H1 (cell line): ENCODE measurements at regions of chr15 and their contacts with region 1.

Region 1: DNA sequence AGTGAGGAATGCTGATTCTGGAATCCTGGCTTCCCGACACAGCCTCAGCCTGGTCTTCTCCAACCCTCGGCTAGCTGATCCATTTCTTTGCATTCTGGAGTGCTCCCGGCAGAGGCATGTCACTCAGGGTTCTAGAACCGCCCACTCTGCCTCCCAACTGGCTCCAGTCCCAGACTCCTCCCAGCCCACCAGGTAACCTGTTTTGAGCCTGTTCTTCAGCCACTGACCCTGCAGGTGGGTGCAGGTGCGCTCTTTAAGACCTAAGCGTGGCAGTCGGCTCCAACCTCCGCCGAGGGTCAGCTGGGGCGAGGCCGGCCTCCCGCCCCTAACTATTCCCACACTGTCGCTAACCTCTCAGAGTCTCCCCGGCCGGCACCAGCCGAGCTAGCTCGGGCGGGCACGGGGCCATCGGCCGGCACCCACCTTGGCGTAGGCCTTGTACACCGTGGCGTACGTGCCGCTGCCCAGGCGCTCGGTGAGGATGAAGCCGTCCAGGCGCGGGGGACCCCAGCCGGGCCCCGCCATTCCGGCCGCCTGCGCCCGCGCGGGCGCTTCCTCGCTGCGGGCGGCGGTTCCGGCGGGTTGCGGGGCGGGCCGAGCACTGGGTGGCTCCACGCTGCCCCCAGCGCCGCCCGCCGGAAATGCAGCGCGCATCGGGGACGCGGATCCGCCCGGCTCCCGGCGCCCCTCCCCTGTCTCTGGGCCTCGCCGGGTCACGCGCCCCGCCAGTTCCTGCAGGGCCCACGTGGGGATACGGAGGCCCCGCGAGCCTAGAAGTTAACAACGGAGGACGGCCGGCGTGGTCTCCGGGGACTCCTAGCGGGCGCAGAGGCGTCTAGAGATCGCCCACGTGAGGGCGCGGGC is at the start of gene ULK3:
- DNase-seq: peak; percentile 89 to 95
- H3K4me3 ChIP-seq: peak within 1 kb of the TSS; percentile 60 to 92 (median 90)
- H3K27ac ChIP-seq: peak within 1 kb of the TSS; percentile 89
- H3K4me1 ChIP-seq: peaks cover 0 to 13% (median 8%) of the 10 kb centered on the region in 4 experiments; a peak in 6 of 7 replicates
- H3K27me3 ChIP-seq: no peaks in the 10 kb centered on the region
- CTCF ChIP-seq: peak; percentile 60 to 68 (median 62)
- EP300 ChIP-seq: no peak
- POLR2A ChIP-seq: peak in 1 of 2 experiments; percentile 54; a peak in 2 of 3 replicates
- RAD21 ChIP-seq: peak in 1 of 2 experiments; percentile 35; a peak in 1 of 4 replicates
- total RNA-seq, gene ULK3: 25.0 and 27.1 TPM in 2 replicates

Region 2: DNA sequence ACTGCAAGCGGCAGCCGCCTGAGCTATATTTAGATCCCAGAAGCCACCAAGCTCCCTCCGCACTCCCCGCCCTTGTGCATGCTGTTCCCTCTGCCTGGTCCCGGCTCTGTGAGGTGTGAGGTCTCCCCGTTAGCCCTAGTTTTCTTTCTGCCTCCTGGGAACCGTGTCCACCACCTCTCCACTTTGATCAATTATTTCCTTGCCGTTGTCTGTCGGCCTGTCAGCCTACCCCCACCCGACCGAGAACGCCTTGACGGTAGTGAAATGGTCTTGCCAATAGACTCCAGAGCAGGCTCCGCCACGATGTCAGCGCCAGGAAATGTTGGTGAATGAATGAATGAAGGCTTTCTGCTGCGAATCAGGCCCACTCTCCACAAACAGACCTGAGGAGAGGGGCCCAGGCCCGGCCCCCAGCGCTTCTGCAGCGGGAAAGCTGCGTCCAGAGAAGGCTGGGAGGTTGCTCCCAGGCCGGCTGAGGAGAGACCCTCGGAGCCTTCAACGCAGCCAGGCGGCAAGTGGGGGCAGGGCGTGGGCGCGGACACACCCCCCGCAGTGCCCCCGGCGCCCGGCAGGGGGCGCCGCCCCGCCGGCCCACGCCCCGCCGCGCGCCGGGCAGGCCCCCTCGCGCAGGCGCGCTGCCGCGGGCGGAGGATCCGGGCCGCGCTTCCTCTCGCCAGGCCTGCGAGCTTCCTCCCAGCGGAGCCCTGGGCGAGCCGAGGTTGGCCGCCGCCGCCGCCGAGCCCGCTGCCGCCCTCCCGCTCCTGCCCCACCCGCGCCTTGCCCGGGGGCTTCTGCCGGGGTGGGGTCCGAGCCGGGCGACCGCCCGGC is 61.2 kb before region 1 on chr15 and contains the start of gene CSK:
- CTCF ChIA-PET with region 1: interaction called, 14 read pairs
- POLR2A ChIA-PET with region 1: interaction called, 7 read pairs
- DNase-seq: peak in 1 of 2 experiments; percentile 79
- H3K4me3 ChIP-seq: peak within 1 kb of the TSS; percentile 55 to 82 (median 60)
- H3K27ac ChIP-seq: no peak within 1 kb of the TSS
- H3K4me1 ChIP-seq: peaks cover 4 to 25% (median 20%) of the 10 kb centered on the region in 4 experiments
- H3K27me3 ChIP-seq: peaks cover 0 to 15% (median 11%) of the 10 kb centered on the region in 4 experiments; a peak in 6 of 7 replicates
- CTCF ChIP-seq: peak; percentile 44 to 72 (median 50)
- EP300 ChIP-seq: no peak
- POLR2A ChIP-seq: no peak
- RAD21 ChIP-seq: no peak; a peak in 1 of 4 replicates
- total RNA-seq, gene CSK: 50.2 and 51.7 TPM in 2 replicates

Region 3: GRCh38 chr15:74787251-74788041 is 55.4 kb before region 1 on chr15:
- CTCF ChIA-PET with region 1: interaction called, 14 read pairs
- POLR2A ChIA-PET with region 1: interaction called, 3 read pairs
- DNase-seq: peak in 1 of 2 experiments; percentile 71
- H3K4me3 ChIP-seq: no peak overlapping the region
- H3K27ac ChIP-seq: no peak overlapping the region
- H3K4me1 ChIP-seq: peaks cover 4 to 34% (median 22%) of the 10 kb centered on the region in 4 experiments
- H3K27me3 ChIP-seq: no peaks in the 10 kb centered on the region
- CTCF ChIP-seq: peak; percentile 79 to 95 (median 88)
- EP300 ChIP-seq: no peak
- POLR2A ChIP-seq: no peak
- RAD21 ChIP-seq: peak; percentile 11 to 47; a peak in 2 of 4 replicates

Region 4: GRCh38 chr15:74826364-74826819 is 16.4 kb before region 1 on chr15 and contains the start of gene CPLX3:
- CTCF ChIA-PET with region 1: interaction called, 46 read pairs
- POLR2A ChIA-PET with region 1: interaction called, 23 read pairs
- DNase-seq: peak in 1 of 2 experiments; percentile 84
- H3K4me3 ChIP-seq: peak within 1 kb of the TSS in 2 of 4 experiments; percentile 5 to 41; a peak in 3 of 8 replicates
- H3K27ac ChIP-seq: no peak within 1 kb of the TSS
- H3K4me1 ChIP-seq: peaks cover 0 to 9% (median 4%) of the 10 kb centered on the region in 4 experiments; a peak in 4 of 7 replicates
- H3K27me3 ChIP-seq: peaks cover 4 to 47% (median 29%) of the 10 kb centered on the region in 4 experiments
- CTCF ChIP-seq: no peak
- EP300 ChIP-seq: no peak
- POLR2A ChIP-seq: no peak
- RAD21 ChIP-seq: no peak
- total RNA-seq, gene CPLX3: not detected in 2 replicates

Region 5: GRCh38 chr15:74857082-74857655 is 14.4 kb after region 1 on chr15:
- CTCF ChIA-PET with region 1: interaction called, 24 read pairs
- POLR2A ChIA-PET with region 1: interaction called, 4 read pairs
- DNase-seq: no peak
- H3K4me3 ChIP-seq: no peak overlapping the region
- H3K27ac ChIP-seq: no peak overlapping the region
- H3K4me1 ChIP-seq: peaks cover 0 to 1% (median 0%) of the 10 kb centered on the region in 4 experiments; a peak in 1 of 7 replicates
- H3K27me3 ChIP-seq: no peaks in the 10 kb centered on the region
- CTCF ChIP-seq: no peak
- EP300 ChIP-seq: no peak
- POLR2A ChIP-seq: no peak
- RAD21 ChIP-seq: no peak

Region 6: DNA sequence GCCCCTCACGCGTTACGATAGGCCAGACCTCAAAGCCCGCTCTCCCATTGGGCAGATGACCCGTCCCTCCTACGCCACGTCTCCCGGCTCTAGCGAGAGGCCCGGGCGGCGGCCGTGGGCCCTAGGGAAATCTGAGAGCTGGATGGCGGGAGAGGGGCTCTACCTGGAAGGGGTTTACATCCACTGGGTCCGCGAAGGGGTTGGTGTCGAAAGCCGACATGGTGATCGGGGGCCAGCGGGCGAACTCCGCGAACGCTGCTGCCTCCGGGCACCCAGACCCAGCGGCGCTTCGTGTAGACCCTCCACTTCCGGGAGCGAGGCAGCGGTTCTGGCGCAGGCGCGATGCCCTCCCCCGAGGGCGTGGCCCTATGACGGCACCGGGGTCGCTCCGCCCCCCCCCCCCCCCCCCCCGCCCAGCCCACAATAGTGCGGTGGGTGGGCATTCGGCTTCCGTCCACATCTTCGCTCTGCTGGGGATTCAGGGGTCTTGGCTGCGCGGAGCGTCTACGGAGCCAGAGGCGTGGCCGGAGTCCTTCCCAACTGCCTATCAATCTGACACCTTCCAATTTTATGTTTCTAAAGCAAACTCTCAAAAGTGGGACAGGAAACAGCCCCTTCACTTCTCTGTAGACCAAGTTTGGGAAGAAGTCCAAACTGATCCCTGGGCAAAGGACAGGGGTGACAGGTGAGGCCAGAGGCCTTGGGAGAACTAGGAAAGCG is 30.4 kb after region 1 on chr15 and contains the start of gene SCAMP2:
- CTCF ChIA-PET with region 1: interaction called, 16 read pairs
- POLR2A ChIA-PET with region 1: interaction called, 5 read pairs
- DNase-seq: peak; percentile 84 to 96
- H3K4me3 ChIP-seq: peak within 1 kb of the TSS; percentile 80 to 98 (median 93)
- H3K27ac ChIP-seq: peak within 1 kb of the TSS; percentile 92; the same call in 1 of the 2 replicates
- H3K4me1 ChIP-seq: peaks cover 0 to 3% (median 0%) of the 10 kb centered on the region in 4 experiments; a peak in 1 of 7 replicates
- H3K27me3 ChIP-seq: no peaks in the 10 kb centered on the region
- CTCF ChIP-seq: no peak
- EP300 ChIP-seq: no peak
- POLR2A ChIP-seq: peak; percentile 81 to 92
- RAD21 ChIP-seq: no peak
- total RNA-seq, gene SCAMP2: 40.3 and 41.7 TPM in 2 replicates